ENCODE measurements at regions of chr16 and their contacts with region 1.

Region 1: DNA sequence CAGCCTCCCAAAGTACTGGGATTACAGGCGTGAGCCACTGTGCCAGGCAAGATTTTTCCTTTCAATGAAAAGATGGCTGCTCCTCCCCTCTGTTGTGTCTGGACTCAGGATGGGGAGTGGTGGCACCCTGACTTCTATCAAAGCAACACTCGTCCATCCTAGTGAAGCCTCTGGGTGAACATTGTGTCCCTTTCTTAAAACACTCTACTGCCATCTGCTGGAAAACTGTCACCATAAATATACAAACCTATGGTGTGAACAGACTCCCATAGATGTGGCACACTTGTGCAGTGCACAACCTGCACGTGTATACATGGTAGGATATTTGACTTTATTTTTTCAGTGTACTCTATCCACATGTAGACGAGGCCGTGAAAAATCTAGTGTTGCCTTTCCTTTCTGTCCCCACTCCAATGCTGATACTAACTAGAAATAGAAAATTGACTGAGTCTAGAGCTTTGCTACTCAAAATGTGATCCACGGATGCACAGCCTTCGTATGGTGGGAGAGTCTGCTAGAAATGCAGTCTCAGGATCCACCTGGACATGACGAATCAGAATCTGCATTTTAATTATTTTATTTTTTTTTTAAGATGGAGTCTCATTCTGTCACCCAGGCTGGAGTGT is 55.9 kb upstream of the PLCG2 start:
- DNase-seq: no peak
- ATAC-seq: peak; percentile 58 to 81 (median 66)
- H3K4me3 ChIP-seq: no peak overlapping the region
- H3K27ac ChIP-seq: no peak overlapping the region
- H3K4me1 ChIP-seq: no peaks in the 10 kb centered on the region
- H3K27me3 ChIP-seq: peaks cover 0 to 1% (median 0%) of the 10 kb centered on the region in 3 donors
- CTCF ChIP-seq: peak; percentile 59

Region 2: DNA sequence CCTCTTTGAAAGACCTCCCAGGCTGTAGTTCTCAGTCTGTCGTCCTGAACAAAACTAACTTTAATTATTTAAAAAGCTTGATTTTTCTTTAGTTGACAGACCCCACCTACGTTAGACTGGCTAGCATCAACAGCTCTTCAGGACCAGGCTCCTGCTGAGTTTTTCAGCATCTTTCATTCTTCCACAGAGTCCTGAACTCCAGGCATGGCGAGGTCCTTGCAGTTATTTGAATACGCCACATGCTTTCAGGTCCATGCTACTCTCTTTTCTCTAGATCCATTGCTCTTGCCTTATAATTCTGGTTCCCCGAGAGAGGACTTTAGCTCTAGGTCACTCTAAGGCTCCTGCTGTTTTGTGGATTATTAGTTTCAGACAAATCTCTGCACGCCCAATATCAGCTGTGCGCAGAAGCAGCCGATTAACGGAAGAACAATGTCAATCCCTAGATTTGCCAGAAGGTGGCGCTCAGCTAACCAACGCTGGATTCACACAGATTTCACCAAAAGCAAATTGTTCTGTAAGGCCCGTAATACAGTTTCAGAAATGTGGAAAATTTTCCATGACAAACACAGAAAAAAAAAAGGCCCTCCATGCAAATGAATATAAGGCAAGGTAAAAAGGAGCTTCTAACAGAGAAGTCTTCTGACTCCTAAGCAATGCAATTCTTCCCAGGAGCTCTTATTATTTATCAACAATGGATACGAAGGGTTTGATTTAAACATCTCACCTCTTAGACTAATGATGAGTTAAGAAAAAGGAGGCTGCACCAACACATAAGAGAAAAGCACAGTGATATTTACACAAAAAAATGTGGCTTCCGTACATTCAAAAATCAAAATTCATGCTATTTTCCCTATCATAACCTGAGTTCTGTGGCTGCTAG is 518.2 kb before region 1 on chr16:
- intact Hi-C with region 1: loop called in 1 of 2 experiments (anchors 10 kb)
- DNase-seq: no peak
- ATAC-seq: peak in 2 of 4 donors; percentile 37 to 65
- H3K4me3 ChIP-seq: no peak overlapping the region
- H3K27ac ChIP-seq: no peak overlapping the region
- H3K4me1 ChIP-seq: no peaks in the 10 kb centered on the region
- H3K27me3 ChIP-seq: no peaks in the 10 kb centered on the region
- CTCF ChIP-seq: peak; percentile 66

Region 3: GRCh38 chr16:81366316-81366932 is 356.8 kb before region 1 on chr16:
- intact Hi-C with region 1: loop called in 1 of 2 experiments (anchors 2 kb)
- DNase-seq: no peak
- ATAC-seq: peak in 2 of 4 donors; percentile 53 to 69
- H3K4me3 ChIP-seq: no peak overlapping the region
- H3K27ac ChIP-seq: no peak overlapping the region
- H3K4me1 ChIP-seq: no peaks in the 10 kb centered on the region
- H3K27me3 ChIP-seq: no peaks in the 10 kb centered on the region
- CTCF ChIP-seq: peak; percentile 61

Region 4: GRCh38 chr16:81403616-81404373 is 319.4 kb before region 1 on chr16:
- intact Hi-C with region 1: loop called (anchors 1 to 2 kb)
- DNase-seq: peak; percentile 82 to 89
- ATAC-seq: peak; percentile 86 to 97 (median 92)
- H3K4me3 ChIP-seq: peak overlapping the region; percentile 50
- H3K27ac ChIP-seq: no peak overlapping the region
- H3K4me1 ChIP-seq: peaks cover 6% of the 10 kb centered on the region
- H3K27me3 ChIP-seq: peaks cover 0 to 17% (median 2%) of the 10 kb centered on the region in 3 donors
- CTCF ChIP-seq: peak; percentile 92

Region 5: DNA sequence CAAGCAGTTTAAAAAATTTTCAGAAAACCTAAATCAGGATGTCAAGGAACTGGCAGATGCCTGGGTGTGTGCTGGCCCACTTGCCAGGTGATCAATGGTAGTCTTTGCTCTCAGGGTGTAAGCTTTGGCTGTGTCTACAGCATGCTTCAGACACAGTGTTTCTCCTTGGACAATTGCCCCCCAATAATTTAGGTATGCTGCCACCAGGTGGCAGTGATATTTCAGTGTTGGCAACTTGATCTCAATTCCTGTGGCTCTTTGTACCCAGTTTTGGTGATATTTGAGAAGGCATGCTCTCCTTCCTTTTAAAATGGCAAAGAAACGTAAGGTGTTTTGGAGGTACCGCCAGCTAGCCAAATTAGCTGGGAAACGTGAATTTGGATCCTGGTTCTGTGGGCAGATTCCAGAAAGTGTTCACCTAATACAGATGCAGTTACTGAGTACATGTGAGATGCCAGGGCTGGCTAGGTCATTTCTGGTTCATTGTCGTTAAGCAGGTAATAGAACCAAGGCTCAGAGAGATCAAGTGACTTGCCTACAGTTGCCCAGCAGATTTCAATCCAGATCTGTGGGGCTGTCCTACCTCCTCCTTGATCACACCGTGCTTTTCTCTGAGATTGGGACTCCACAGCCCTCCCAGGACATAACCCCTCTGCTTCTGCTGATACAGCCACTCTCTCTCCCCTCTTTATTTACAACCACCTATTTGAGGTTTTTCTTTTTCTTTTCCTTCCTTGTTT is 99.7 kb before region 1 on chr16:
- intact Hi-C with region 1: loop called in 1 of 2 experiments (anchors 5 kb)
- DNase-seq: no peak
- ATAC-seq: no peak
- H3K4me3 ChIP-seq: no peak overlapping the region
- H3K27ac ChIP-seq: no peak overlapping the region
- H3K4me1 ChIP-seq: no peaks in the 10 kb centered on the region
- H3K27me3 ChIP-seq: no peaks in the 10 kb centered on the region
- CTCF ChIP-seq: peak; percentile 31

Region 6: GRCh38 chr16:81855552-81856153 is 132.4 kb after region 1 on chr16:
- intact Hi-C with region 1: no loop called
- DNase-seq: no peak
- ATAC-seq: no peak
- H3K4me3 ChIP-seq: no peak overlapping the region
- H3K27ac ChIP-seq: no peak overlapping the region
- H3K4me1 ChIP-seq: no peaks in the 10 kb centered on the region
- H3K27me3 ChIP-seq: no peaks in the 10 kb centered on the region
- CTCF ChIP-seq: no peak

Region 7: GRCh38 chr16:82260212-82260795 is 537.1 kb after region 1 on chr16:
- intact Hi-C with region 1: no loop called
- DNase-seq: no peak
- ATAC-seq: no peak
- H3K4me3 ChIP-seq: no peak overlapping the region
- H3K27ac ChIP-seq: no peak overlapping the region
- H3K4me1 ChIP-seq: no peaks in the 10 kb centered on the region
- H3K27me3 ChIP-seq: no peaks in the 10 kb centered on the region
- CTCF ChIP-seq: no peak

Measured in psoas muscle (tissue), 8 donors.